ENCODE measurements at regions of chr13 and their contacts with region 1.

Region 1: DNA sequence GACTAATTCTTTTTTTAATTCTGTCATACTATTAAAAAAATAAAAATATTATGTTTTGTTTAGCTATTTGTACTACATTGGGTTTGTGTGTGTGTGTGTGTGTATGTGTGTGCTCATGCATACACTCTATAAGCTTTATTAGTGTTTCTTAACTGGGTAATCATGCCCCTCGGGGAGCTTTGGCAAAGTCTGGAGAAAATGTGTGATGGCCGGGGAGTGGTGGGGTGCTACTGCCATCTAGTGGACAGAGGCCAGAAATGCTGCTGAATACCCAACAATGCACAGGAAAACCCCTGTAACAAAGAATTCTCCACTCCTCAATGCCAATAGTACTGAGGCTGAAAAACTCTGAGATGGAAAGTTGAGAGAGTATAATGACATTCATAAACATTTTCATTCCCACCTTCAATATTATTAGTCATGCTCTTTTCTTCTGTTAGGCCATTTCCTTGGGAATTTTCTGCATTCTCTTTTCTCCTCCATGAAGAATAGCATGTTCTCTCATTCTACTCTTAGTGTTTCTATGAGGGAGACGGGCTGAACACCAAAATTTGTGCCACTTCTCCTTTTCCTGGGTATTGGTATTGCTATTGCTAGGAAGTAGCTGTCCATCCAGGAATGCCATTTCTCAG is 157.3 kb downstream of the DNAJC3 start:
- DNase-seq: peak; percentile 24 to 82 (median 56)
- ATAC-seq: peak; percentile 73
- H3K4me3 ChIP-seq: no peak overlapping the region
- H3K4me3 Mint-ChIP-seq: no peak overlapping the region
- H3K27ac ChIP-seq: no peak overlapping the region
- H3K27ac Mint-ChIP-seq: no peak overlapping the region
- H3K4me1 ChIP-seq: no peaks in the 10 kb centered on the region
- H3K4me1 Mint-ChIP-seq: no peaks in the 10 kb centered on the region
- H3K27me3 ChIP-seq: peaks cover 3 to 12% of the 10 kb centered on the region in 2 experiments
- H3K27me3 Mint-ChIP-seq: peaks cover 39% of the 10 kb centered on the region
- CTCF ChIP-seq: peak; percentile 94

Region 2: DNA sequence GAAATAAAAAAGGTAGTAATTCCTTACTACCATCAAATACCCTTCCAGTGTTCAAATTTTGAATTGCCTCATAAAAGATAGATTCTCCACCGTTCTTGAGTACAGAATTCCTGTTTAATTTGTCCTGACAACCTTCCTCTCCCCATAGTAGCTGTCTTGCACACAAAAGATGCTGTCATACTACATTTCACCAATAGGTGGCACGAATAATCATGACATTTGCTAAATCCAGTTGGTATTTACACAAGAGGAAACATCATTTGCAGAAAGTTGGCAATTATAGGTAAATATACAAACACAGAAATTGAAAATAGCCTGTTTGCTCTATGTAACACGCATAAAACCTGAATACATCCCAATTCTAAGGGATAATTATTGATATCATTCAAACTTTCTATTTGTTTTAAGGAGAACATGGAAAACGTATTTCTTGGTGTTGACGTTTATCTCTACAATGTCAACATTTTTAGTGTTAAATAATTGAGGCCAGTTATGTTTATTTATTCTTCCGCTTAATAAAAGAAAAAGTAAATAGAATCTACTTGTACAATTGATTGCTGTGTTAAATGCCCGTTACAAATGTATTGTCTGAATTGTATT is 340.1 kb before region 1 on chr13:
- CTCF ChIA-PET with region 1: interaction called, 3 read pairs
- POLR2A ChIA-PET with region 1: no interaction called
- intact Hi-C with region 1: loop called (anchors 1 kb)
- DNase-seq: peak in 3 of 14 experiments; percentile 45 to 65 (median 58)
- ATAC-seq: no peak
- H3K4me3 ChIP-seq: no peak overlapping the region
- H3K4me3 Mint-ChIP-seq: no peak overlapping the region
- H3K27ac ChIP-seq: no peak overlapping the region
- H3K27ac Mint-ChIP-seq: no peak overlapping the region
- H3K4me1 ChIP-seq: no peaks in the 10 kb centered on the region
- H3K4me1 Mint-ChIP-seq: no peaks in the 10 kb centered on the region
- H3K27me3 ChIP-seq: peaks cover 0 to 5% of the 10 kb centered on the region in 2 experiments
- H3K27me3 Mint-ChIP-seq: peaks cover 19% of the 10 kb centered on the region
- CTCF ChIP-seq: peak; percentile 73

Region 3: DNA sequence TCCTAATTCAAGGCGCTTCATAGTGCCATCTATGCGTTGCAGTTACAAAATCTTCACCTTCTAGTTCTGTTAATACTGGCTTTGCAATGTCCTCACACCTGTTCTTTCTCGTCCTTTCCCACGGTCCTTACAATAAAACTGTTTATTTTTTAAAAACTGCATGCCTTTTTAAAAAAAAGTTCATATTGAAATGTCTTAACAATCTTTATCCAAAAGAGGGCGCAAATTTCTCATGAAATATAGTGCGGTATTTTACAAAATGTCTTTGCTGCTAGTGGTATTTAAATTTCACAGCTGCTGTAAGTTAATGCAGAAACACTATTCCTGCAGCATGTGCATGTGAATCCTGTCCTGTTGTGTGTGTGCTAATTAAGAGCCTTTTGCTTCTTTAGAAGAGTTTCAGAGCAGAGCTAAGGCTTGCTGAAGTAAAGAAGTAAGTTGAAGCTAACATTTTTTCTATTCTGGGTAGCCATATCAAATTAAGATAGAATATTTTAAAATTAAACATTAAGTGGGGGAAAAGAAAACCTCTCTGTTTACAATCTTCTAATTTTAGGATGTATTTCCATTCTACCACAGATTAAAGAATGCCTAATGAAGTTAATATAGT is 297.5 kb before region 1 on chr13:
- CTCF ChIA-PET with region 1: interaction called, 15 read pairs
- POLR2A ChIA-PET with region 1: no interaction called
- intact Hi-C with region 1: loop called (anchors 1 kb)
- DNase-seq: peak in 1 of 14 experiments; percentile 4
- ATAC-seq: no peak
- H3K4me3 ChIP-seq: no peak overlapping the region
- H3K4me3 Mint-ChIP-seq: no peak overlapping the region
- H3K27ac ChIP-seq: no peak overlapping the region
- H3K27ac Mint-ChIP-seq: no peak overlapping the region
- H3K4me1 ChIP-seq: no peaks in the 10 kb centered on the region
- H3K4me1 Mint-ChIP-seq: no peaks in the 10 kb centered on the region
- H3K27me3 ChIP-seq: peaks cover 0 to 19% of the 10 kb centered on the region in 2 experiments
- H3K27me3 Mint-ChIP-seq: peaks cover 40% of the 10 kb centered on the region
- CTCF ChIP-seq: peak; percentile 41

Region 4: DNA sequence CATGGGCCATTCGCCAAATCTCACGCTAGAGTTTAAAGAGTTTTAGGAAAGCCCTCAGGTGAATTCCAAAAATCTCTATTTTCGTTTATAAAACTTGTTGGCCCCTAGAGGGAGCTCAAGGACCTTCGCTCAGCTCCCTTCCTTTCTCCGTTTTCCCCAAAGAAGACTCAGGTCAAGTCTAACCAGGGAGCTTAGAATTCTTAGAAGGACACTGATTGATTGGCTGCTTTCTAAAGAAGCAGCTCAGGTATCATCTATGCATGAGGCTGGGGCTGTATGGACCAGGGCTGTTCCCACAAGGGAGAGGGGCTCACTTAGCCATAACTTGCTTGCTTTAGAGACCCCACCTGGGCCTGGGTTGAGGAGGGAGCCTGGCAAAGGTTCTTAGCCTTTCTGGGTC is 210.2 kb before region 1 on chr13:
- CTCF ChIA-PET with region 1: interaction called, 27 read pairs
- POLR2A ChIA-PET with region 1: interaction called, 3 read pairs
- intact Hi-C with region 1: loop called (anchors 1 kb)
- DNase-seq: peak in 4 of 14 experiments; percentile 33 to 70 (median 54)
- ATAC-seq: no peak
- H3K4me3 ChIP-seq: no peak overlapping the region
- H3K4me3 Mint-ChIP-seq: no peak overlapping the region
- H3K27ac ChIP-seq: no peak overlapping the region
- H3K27ac Mint-ChIP-seq: no peak overlapping the region
- H3K4me1 ChIP-seq: no peaks in the 10 kb centered on the region
- H3K4me1 Mint-ChIP-seq: no peaks in the 10 kb centered on the region
- H3K27me3 ChIP-seq: peaks cover 0 to 4% of the 10 kb centered on the region in 2 experiments
- H3K27me3 Mint-ChIP-seq: peaks cover 22% of the 10 kb centered on the region
- CTCF ChIP-seq: peak; percentile 74

Region 5: DNA sequence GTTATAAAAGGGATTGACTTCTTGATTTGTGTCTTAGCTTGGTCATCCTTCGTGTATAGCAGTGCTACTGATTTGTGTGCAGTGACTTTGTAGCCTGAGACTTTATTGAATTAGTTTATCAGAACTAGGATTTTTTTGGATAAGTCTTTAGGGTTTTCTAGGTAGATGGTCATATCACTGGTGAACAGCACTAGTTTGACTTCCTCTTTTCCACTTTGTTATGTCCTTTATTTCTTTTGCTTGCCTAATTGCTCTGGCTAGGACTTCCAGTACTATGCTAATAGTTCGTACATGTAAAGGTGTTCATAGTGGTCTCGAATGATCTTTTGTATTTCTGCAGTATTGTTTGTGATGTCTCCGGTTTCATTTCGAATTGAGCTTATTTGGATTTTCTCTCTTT is 11.9 kb before region 1 on chr13:
- CTCF ChIA-PET with region 1: interaction called, 10 read pairs
- POLR2A ChIA-PET with region 1: no interaction called
- intact Hi-C with region 1: no loop called
- DNase-seq: no peak
- ATAC-seq: no peak
- H3K4me3 ChIP-seq: no peak overlapping the region
- H3K4me3 Mint-ChIP-seq: no peak overlapping the region
- H3K27ac ChIP-seq: no peak overlapping the region
- H3K27ac Mint-ChIP-seq: no peak overlapping the region
- H3K4me1 ChIP-seq: no peaks in the 10 kb centered on the region
- H3K4me1 Mint-ChIP-seq: no peaks in the 10 kb centered on the region
- H3K27me3 ChIP-seq: peaks cover 9% of the 10 kb centered on the region in 2 experiments
- H3K27me3 Mint-ChIP-seq: peaks cover 32% of the 10 kb centered on the region
- CTCF ChIP-seq: no peak

Measured in CD4-positive, alpha-beta T cell (primary cell).